ENCODE measurements at regions of chr12 and their contacts with region 1.

Region 1: GRCh38 chr12:64431791-64432190 is 20.1 kb upstream of the TBK1 start:
- DNase-seq: no peak
- ATAC-seq: no peak
- H3K4me3 ChIP-seq: no peak overlapping the region
- H3K27ac ChIP-seq: no peak overlapping the region
- H3K4me1 ChIP-seq: no peaks in the 10 kb centered on the region
- H3K27me3 ChIP-seq: no peaks in the 10 kb centered on the region
- CTCF ChIP-seq: no peak

Region 2: DNA sequence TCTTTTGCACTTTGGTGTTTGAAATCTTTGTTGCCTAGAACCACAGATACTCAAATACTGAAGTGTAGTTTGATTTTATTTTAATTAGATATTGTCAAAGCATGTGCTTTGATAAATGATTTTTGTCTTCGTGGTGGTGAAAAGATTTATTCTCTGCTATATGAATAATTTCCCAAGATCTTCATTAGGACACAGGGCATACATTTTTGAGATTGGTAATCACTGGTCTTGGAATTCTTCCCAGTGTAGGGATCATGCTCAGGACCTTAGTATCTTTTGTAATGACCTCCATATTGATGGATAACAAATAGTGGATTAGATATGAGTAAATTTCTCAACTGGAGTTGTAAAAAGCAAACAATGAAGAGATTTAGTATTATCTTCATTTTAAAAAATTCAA is 48.4 kb after region 1 on chr12:
- intact Hi-C with region 1: loop called in 1 of 10 experiments (anchors 10 kb)
- DNase-seq: no peak
- ATAC-seq: no peak
- H3K4me3 ChIP-seq: no peak overlapping the region
- H3K27ac ChIP-seq: no peak overlapping the region
- H3K4me1 ChIP-seq: no peaks in the 10 kb centered on the region
- H3K27me3 ChIP-seq: no peaks in the 10 kb centered on the region
- CTCF ChIP-seq: no peak

Region 3: GRCh38 chr12:64706306-64706705 is 274.5 kb after region 1 on chr12:
- intact Hi-C with region 1: no loop called
- DNase-seq: no peak
- ATAC-seq: peak in 3 of 8 donors; percentile 27 to 54 (median 42)
- H3K4me3 ChIP-seq: no peak overlapping the region
- H3K27ac ChIP-seq: no peak overlapping the region
- H3K4me1 ChIP-seq: peaks cover 2 to 18% (median 10%) of the 10 kb centered on the region in 9 donors
- H3K27me3 ChIP-seq: no peaks in the 10 kb centered on the region
- CTCF ChIP-seq: no peak

Region 4: GRCh38 chr12:65121049-65121955 is 689.5 kb after region 1 on chr12 and contains the start of gene WIF1:
- intact Hi-C with region 1: no loop called
- DNase-seq: peak in 1 of 2 donors; percentile 14
- ATAC-seq: peak in 2 of 8 donors; percentile 34 to 51
- H3K4me3 ChIP-seq: peak within 1 kb of the TSS in 9 of 10 donors; percentile 21 to 48 (median 30)
- H3K27ac ChIP-seq: no peak within 1 kb of the TSS
- H3K4me1 ChIP-seq: peaks cover 4 to 12% (median 9%) of the 10 kb centered on the region in 9 donors
- H3K27me3 ChIP-seq: peaks cover 7 to 100% (median 97%) of the 10 kb centered on the region in 7 donors
- CTCF ChIP-seq: peak in 7 of 9 donors; percentile 11 to 44 (median 31)
- total RNA-seq, gene WIF1: not detected